ENCODE measurements at regions of chr2 and their contacts with region 1.

Region 1: DNA sequence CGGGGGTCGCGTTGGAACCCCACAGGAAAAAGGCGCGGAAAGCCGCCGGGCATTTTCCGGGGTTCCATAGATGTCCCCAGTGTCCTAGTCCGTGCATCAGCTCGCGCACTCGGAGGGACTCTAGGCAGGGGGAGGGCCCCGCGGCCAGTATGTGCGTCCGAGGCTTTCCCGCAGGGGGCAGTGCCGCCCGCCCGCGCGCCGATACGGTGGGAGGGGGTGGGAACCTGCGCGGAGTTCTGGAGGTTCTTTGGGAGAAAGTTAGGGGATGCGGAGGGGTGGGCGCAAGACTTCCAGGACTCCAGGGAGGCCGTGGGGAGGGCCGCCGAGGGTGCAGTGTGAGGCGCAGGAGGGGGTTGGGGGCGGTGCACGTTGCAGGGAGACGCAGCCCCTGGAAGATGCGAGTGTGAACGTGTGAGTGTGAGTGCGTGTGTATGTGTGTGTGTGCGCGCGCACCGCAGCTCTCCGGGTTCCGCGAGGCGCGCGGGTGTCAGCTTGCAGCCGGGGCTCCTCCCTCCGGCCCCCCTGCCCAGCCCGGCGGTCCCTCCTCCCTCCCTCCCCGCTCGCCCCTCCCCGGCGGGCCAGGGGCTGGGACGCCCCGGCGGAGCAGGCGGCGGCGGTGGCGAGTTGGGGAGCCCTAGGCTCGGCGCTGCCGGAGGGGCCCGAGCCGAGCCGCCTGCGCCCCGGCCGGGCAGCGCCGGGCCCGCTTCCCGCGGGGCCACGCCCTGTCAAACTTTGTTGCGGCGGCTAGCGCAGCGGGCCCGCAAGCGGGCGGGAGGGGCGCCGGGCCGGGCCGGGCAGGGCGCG is at the start of gene TCF7L1:
- DNase-seq: peak; percentile 86
- ATAC-seq: peak; percentile 93 to 97 (median 96)
- H3K4me3 ChIP-seq: peak within 1 kb of the TSS; percentile 70 to 97 (median 80)
- H3K27ac ChIP-seq: peak within 1 kb of the TSS; percentile 33 to 90 (median 84)
- H3K4me1 ChIP-seq: peaks cover 0 to 47% (median 40%) of the 10 kb centered on the region in 9 donors
- H3K27me3 ChIP-seq: peaks cover 0 to 54% (median 0%) of the 10 kb centered on the region in 7 donors
- CTCF ChIP-seq: peak; percentile 82 to 96 (median 90)
- total RNA-seq, gene TCF7L1: 4.5 to 10.9 (median 6.3) TPM

Region 2: DNA sequence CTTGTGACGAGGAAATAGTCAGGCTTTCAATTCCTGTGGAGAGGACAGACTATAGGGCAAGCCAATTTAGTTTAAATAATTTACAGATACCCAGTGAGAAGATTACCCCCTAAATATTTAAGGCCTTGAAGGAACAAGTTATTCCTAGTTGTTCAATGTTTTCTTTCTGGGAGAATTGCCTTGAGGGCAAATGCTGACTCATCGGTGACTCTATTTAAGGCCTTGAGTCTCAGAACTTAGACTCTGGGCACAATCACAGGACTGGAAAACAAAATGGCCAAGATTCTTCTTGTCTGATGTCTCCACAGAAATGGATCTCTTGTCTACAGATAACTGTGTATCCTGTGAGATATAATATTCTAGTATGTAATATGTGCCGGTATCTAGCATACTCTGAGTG is 1141.0 kb before region 1 on chr2:
- intact Hi-C with region 1: no loop called
- DNase-seq: no peak
- ATAC-seq: no peak
- H3K4me3 ChIP-seq: no peak overlapping the region
- H3K27ac ChIP-seq: no peak overlapping the region
- H3K4me1 ChIP-seq: no peaks in the 10 kb centered on the region
- H3K27me3 ChIP-seq: no peaks in the 10 kb centered on the region
- CTCF ChIP-seq: no peak

Region 3: DNA sequence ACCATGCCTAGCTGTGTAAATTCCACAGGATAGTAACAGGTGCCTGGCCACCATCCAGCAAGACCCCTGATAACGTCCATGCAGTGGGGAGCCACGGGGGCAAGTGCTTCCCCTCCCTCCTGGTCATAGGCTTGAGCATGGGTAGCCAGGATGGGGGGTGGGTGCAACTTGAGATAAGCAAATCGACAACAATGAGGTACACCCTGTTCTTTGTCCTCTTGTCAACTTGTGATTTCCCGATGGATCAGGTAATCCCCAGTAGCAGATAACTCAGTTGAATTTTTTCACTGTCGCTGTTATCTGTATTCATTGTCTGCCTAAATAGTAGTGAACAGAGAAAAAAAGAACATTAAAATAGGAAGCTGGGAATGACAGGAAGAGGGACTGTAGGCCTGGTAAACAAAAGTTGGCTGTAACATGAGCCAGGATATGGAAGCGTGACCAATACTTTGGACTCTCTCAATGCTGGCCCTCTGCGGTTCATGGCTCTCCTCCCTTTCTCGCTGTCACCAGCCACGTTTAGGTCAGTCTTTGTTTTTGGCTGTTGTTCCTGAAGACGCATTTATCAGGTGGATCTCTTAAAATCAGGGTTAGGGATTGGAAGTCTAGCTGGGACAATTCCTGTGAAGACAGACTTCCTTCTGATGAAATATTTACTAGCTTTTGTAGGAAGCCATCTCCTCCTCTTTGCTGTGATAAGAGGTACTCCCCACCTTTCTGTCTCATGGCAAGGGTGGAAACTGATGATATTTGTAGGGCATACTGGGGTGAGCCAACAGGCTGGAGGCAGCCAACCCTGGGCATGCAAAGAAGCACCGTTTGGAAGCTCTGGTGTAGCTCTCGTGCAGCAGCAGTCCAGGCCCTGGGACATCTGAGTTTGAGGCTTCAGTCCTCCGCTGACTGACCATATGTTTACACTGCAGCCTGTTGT is 42.6 kb after region 1 on chr2:
- intact Hi-C with region 1: loop called in 2 of 10 experiments (anchors 5 kb)
- DNase-seq: peak in 1 of 2 donors; percentile 43
- ATAC-seq: peak in 7 of 8 donors; percentile 61 to 81 (median 78)
- H3K4me3 ChIP-seq: no peak overlapping the region
- H3K27ac ChIP-seq: peak overlapping the region in 9 of 10 donors; percentile 20 to 70 (median 47)
- H3K4me1 ChIP-seq: peaks cover 4 to 77% (median 62%) of the 10 kb centered on the region in 9 donors
- H3K27me3 ChIP-seq: no peaks in the 10 kb centered on the region
- CTCF ChIP-seq: no peak

Region 4: GRCh38 chr2:85243101-85244072 is 110.4 kb after region 1 on chr2:
- intact Hi-C with region 1: loop called in 6 of 10 experiments (anchors 2 to 5 kb)
- DNase-seq: peak; percentile 62 to 66
- ATAC-seq: peak in 7 of 8 donors; percentile 30 to 73 (median 52)
- H3K4me3 ChIP-seq: no peak overlapping the region
- H3K27ac ChIP-seq: no peak overlapping the region
- H3K4me1 ChIP-seq: peaks cover 7 to 91% (median 55%) of the 10 kb centered on the region in 9 donors
- H3K27me3 ChIP-seq: no peaks in the 10 kb centered on the region
- CTCF ChIP-seq: peak; percentile 17 to 70 (median 59)

Region 5: GRCh38 chr2:85288244-85288725 is 155.2 kb after region 1 on chr2:
- intact Hi-C with region 1: loop called (anchors 1 to 5 kb)
- DNase-seq: no peak
- ATAC-seq: no peak
- H3K4me3 ChIP-seq: no peak overlapping the region
- H3K27ac ChIP-seq: no peak overlapping the region
- H3K4me1 ChIP-seq: peaks cover 0 to 18% (median 12%) of the 10 kb centered on the region in 9 donors
- H3K27me3 ChIP-seq: no peaks in the 10 kb centered on the region
- CTCF ChIP-seq: no peak

Region 6: DNA sequence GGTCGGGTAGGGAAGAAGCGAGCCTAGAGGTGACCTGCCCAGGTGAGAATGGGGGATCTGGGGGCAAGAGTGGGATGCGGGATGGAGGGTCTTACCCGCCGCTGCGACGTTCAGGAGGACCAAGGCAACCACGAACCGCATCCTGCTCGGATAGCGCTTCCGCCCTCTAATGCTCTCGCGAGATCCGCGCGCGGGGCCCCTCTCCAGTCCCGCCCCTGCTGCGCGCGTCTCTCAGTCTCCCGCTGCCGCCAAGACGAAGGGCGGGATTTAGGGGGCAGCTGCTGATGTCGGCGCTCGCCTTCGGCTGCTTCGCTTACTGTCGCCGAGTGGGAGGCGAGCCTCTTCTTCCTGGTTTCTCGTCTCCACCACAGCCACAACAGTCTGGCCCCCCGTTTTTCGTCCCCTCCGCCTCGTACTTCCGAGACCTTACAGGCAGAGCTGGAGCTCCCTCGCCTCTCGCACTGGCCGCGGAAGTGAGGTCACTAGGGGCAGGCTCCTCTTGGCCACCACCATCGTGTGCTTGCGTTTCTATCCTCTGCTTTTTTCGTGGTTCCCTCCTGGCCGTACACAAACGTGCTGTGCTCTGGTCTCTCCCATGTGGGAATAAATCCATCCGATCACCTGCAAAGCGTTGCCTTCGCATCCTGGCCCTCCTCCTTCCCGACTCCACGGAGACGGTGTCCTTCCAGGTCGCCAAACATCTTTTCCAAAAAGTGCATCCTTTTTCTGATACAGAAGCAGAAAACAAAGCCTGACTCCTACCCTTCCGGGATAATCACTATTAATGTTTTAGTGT is 195.0 kb after region 1 on chr2 and contains the start of gene TGOLN2:
- intact Hi-C with region 1: no loop called
- DNase-seq: peak; percentile 94 to 95
- ATAC-seq: peak; percentile 98 to 99 (median 98)
- H3K4me3 ChIP-seq: peak within 1 kb of the TSS; percentile 57 to 90 (median 70)
- H3K27ac ChIP-seq: peak within 1 kb of the TSS; percentile 93 to 99 (median 97)
- H3K4me1 ChIP-seq: peaks cover 14 to 52% (median 43%) of the 10 kb centered on the region in 9 donors
- H3K27me3 ChIP-seq: no peaks in the 10 kb centered on the region
- CTCF ChIP-seq: peak in 3 of 9 donors; percentile 23 to 36 (median 29)
- total RNA-seq, gene TGOLN2: 66.2 to 99.9 (median 78.4) TPM